HepG2 (cell line): ENCODE measurements at regions of chr1 and their contacts with region 1.

Region 1: GRCh38 chr1:78607334-78607927 is 12.8 kb upstream of the IFI44L start:
- DNase-seq: no peak
- ATAC-seq: peak; percentile 67
- H3K4me3 ChIP-seq: peak overlapping the region; percentile 35 to 67 (median 54); a peak in 5 of 6 replicates
- H3K27ac ChIP-seq: no peak overlapping the region
- H3K4me1 ChIP-seq: peaks cover 16% of the 10 kb centered on the region; the same call in 1 of the 2 replicates
- H3K27me3 ChIP-seq: no peaks in the 10 kb centered on the region
- CTCF ChIP-seq: no peak; the same call in 1 of the 2 replicates
- EP300 ChIP-seq: no peak
- POLR2A ChIP-seq: no peak
- RAD21 ChIP-seq: no peak

Region 2: GRCh38 chr1:78126506-78126905 is 480.9 kb before region 1 on chr1:
- CTCF ChIA-PET with region 1: interaction called, 8 read pairs
- POLR2A ChIA-PET with region 1: no interaction called
- in situ Hi-C with region 1: no loop called
- intact Hi-C with region 1: loop called (anchors 1 kb)
- DNase-seq: no peak
- ATAC-seq: no peak
- H3K4me3 ChIP-seq: no peak overlapping the region
- H3K27ac ChIP-seq: no peak overlapping the region
- H3K4me1 ChIP-seq: no peaks in the 10 kb centered on the region
- H3K27me3 ChIP-seq: no peaks in the 10 kb centered on the region
- CTCF ChIP-seq: no peak
- EP300 ChIP-seq: no peak
- POLR2A ChIP-seq: no peak
- RAD21 ChIP-seq: no peak

Region 3: DNA sequence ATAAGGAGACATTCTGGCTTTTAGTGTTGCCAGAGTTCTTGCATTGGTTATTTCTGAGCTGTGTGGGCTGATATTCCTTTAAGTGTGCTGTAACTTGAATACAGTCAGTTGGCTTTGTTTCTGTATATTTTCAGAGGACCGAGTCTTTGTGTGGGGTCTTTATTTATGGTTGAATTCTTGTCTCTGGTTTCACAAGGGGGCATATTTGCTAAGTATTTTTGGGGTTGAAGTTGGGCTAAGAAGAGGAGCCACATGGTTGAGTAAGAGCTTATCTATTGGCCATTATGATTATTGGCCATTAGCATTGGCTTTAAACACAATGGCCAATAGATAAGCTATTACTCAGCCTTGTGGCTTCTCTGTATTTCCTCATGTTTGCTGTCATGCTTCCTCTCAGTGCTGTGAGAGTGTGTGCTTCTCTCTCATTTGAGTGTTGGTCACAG is 143.0 kb before region 1 on chr1:
- CTCF ChIA-PET with region 1: no interaction called
- POLR2A ChIA-PET with region 1: no interaction called
- in situ Hi-C with region 1: no loop called
- intact Hi-C with region 1: no loop called
- DNase-seq: no peak
- ATAC-seq: no peak
- H3K4me3 ChIP-seq: no peak overlapping the region
- H3K27ac ChIP-seq: no peak overlapping the region
- H3K4me1 ChIP-seq: no peaks in the 10 kb centered on the region
- H3K27me3 ChIP-seq: no peaks in the 10 kb centered on the region
- CTCF ChIP-seq: no peak
- EP300 ChIP-seq: no peak
- POLR2A ChIP-seq: no peak
- RAD21 ChIP-seq: no peak